Naive thymus-derived CD8-positive, alpha-beta T cell (primary cell): ENCODE measurements at regions of chr2 and their contacts with region 1.

Region 1: GRCh38 chr2:26244309-26245121 is at the starts of genes HADHA and HADHB:
- DNase-seq: peak; percentile 68 to 98 (median 81)
- ATAC-seq: peak; percentile 85 to 86
- H3K4me3 Mint-ChIP-seq: peak within 1 kb of the TSS; percentile 96 to 99 (median 98)
- H3K27ac Mint-ChIP-seq: peak within 1 kb of the TSS; percentile 97 to 100 (median 99)
- H3K4me1 Mint-ChIP-seq: peaks cover 35 to 75% (median 65%) of the 10 kb centered on the region in 4 donors
- H3K27me3 Mint-ChIP-seq: no peaks in the 10 kb centered on the region
- polyA plus RNA-seq, gene HADHA: 107 to 147 (median 118) TPM
- polyA plus RNA-seq, gene HADHB: 80.2 to 93.9 (median 81.2) TPM

Region 2: DNA sequence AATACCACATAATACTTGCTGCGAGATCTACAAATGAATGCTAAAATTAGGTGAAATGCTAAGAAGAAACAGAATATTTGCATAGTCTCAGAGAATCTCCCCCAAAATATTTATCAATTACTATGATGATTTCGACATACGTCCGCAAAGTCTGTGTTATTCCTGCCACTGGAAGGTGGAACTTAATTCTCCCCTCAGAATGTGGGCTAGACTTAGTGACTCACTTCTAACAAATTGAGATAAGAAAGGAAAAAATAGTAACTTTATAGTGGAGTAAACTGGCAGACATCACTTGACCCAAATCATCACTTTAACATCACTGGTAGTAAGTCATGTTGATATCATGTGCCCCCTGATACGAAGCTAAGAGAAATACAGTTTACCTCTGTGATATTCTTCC is 23.7 kb after region 1 on chr2:
- POLR2A ChIA-PET with region 1: no interaction called
- DNase-seq: no peak
- ATAC-seq: no peak
- H3K4me3 Mint-ChIP-seq: no peak overlapping the region
- H3K27ac Mint-ChIP-seq: peak overlapping the region in 1 of 10 donors; percentile 18
- H3K4me1 Mint-ChIP-seq: peaks cover 0 to 2% (median 0%) of the 10 kb centered on the region in 4 donors
- H3K27me3 Mint-ChIP-seq: no peaks in the 10 kb centered on the region

Region 3: DNA sequence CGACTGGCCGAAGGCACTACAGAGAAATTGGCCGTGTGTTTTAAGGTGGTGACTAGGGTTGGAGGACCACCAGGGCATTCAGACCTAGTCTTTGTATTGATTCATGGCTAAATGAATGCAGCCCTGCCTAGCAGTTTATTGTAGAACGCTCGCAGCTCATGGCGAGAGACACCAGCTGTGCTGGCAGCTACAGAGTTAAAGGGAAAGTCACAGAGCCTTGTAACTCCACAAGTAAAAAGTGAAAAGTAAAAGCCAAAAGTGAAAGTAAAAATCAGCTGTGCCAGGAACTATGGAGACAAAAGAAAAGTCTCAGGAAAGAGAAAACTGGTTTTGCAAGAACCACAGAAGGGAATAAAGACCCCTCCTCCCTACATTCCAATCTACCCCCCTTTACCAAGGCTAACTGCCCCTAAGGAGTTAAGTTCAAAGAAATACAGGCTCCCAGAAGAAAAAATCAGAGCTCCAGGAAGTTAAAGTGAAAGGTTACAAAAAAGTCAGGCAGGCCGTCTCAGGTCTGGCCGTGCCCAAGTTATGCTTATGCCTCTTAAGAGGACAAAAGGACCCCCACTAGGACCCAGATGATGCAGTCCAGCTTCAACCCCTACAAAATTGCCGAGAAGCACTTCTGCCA is 55.1 kb after region 1 on chr2:
- POLR2A ChIA-PET with region 1: interaction called, 26 read pairs
- DNase-seq: peak in 6 of 10 donors; percentile 9 to 56 (median 38)
- ATAC-seq: peak; percentile 50 to 67
- H3K4me3 Mint-ChIP-seq: no peak overlapping the region
- H3K27ac Mint-ChIP-seq: no peak overlapping the region
- H3K4me1 Mint-ChIP-seq: peaks cover 0 to 5% (median 3%) of the 10 kb centered on the region in 4 donors
- H3K27me3 Mint-ChIP-seq: no peaks in the 10 kb centered on the region